ENCODE measurements at regions of chr15 and their contacts with region 1.

Region 1: DNA sequence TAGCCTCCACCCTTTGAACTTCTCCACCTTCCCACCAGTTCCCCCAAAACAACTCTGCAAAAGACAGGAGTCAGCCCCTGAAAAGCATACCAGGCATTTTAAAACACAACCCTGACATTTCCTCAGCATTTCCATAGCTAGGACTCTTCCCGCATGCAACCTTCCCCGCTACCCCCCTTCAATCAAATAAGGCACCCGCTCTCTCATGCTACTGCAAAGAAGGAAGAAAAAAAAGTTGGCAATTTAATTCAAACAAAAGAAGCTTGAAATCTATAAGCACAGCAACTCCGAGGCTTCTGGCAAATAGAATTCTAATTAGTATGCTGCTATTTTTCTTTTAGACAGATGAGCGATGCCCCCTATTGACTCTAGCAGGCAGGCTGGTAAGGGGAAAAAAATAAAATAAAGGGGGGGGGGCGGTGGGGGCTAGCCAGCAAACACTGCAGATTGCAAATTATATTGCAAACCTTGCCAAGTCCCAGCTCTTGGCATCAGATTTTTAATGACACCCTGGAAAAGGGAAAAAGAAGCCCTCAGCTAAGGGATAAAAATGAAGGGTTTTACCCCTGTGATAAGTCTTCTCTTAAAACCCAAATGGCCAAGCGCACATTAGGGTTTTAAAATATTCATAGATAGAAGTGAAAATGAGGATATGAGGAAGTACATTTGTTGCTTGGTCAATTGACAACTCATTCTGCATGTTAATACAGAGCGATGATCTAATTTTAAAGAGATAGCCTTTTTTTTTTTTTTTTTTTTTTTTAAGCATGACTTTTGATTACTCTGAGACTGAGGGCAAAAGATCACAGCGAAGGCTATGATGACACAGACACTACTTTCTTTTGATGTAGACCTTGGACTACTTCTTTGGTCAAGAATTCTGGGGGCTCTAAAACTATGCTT is 255.2 kb downstream of the NR2F2 start:
- DNase-seq: peak; percentile 8
- H3K4me3 Mint-ChIP-seq: no peak overlapping the region
- H3K27ac Mint-ChIP-seq: no peak overlapping the region
- H3K4me1 Mint-ChIP-seq: no peaks in the 10 kb centered on the region
- H3K27me3 Mint-ChIP-seq: peaks cover 87% of the 10 kb centered on the region
- CTCF ChIP-seq: no peak

Region 2: GRCh38 chr15:96064351-96064756 is 521.4 kb before region 1 on chr15:
- CTCF ChIA-PET with region 1: no interaction called
- POLR2A ChIA-PET with region 1: no interaction called
- intact Hi-C with region 1: no loop called
- DNase-seq: peak; percentile 12
- H3K4me3 Mint-ChIP-seq: no peak overlapping the region
- H3K27ac Mint-ChIP-seq: no peak overlapping the region
- H3K4me1 Mint-ChIP-seq: no peaks in the 10 kb centered on the region
- H3K27me3 Mint-ChIP-seq: no peaks in the 10 kb centered on the region
- CTCF ChIP-seq: no peak

Region 3: DNA sequence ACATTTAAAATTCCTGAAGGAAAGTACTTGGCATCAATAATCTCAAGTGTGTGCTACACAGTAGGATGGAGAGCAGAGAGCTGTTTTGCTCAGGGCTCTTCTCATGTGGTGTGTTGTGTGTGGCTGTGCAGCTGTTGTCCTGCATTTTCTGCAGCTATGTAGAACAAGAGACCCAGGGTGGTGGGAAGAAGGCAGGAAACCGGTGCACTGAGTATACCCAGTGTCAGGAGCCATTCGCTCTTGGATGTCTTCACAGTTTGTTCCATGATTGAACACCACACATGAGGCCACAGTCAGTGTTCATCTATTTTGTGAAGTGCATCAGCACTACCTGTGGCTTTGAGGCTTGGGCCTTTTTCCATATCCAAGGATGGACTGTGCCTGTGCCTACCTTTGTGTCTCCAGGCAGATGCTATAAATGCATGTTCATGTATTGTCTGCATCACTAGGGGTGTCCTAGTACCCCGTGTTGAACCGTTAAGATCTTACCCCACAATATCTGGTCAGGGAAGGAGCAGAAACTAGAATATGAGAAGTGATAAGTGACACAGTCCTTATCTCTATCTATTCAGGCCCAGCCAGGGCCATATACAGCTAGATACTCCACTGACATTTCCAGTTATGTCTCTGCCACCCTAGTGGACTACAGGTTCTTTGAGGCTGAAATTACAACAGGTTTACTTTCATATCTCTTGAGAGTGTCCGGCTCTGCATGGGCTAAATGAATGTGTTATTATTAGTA is 60.9 kb before region 1 on chr15:
- CTCF ChIA-PET with region 1: no interaction called
- POLR2A ChIA-PET with region 1: no interaction called
- intact Hi-C with region 1: no loop called
- DNase-seq: no peak
- H3K4me3 Mint-ChIP-seq: no peak overlapping the region
- H3K27ac Mint-ChIP-seq: no peak overlapping the region
- H3K4me1 Mint-ChIP-seq: no peaks in the 10 kb centered on the region
- H3K27me3 Mint-ChIP-seq: peaks cover 77% of the 10 kb centered on the region
- CTCF ChIP-seq: no peak

Region 4: DNA sequence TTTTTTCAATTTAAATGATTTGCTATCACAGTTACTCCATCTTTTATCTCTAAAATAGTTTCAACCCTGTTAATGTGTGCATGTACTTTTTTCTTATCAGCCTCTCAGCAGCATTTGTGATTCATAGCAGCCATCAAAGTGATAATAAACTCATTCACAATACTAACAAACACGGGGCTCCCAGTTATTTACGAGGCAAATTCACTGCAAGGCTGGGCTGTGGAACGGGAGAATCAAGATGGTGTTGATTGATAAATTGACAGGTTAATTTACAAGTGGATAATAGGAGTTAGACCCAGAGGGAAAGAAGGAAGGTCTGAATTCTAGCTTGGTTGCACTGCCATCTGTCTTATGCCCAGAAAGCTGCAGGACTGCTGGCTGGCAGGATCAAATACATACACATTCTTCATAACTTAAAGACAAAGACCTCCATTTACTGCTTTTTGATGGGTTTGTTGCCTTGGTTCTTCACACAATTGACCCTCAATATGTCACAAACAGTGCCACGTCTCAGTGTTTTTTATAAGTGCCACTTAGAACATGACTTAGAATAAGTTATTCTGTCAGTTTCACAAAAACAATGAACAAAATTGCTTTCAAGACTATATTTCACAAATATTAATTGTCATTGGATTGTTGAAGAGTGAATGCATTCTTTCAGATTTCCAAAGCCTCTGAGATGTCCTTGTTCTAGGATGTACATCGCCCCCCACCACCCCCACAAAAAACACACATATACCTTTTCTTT is 307.6 kb after region 1 on chr15:
- CTCF ChIA-PET with region 1: interaction called, 5 read pairs
- POLR2A ChIA-PET with region 1: no interaction called
- intact Hi-C with region 1: loop called (anchors 2 kb)
- DNase-seq: peak; percentile 49
- H3K4me3 Mint-ChIP-seq: no peak overlapping the region
- H3K27ac Mint-ChIP-seq: no peak overlapping the region
- H3K4me1 Mint-ChIP-seq: peaks cover 9% of the 10 kb centered on the region
- H3K27me3 Mint-ChIP-seq: no peaks in the 10 kb centered on the region
- CTCF ChIP-seq: peak; percentile 62

Region 5: GRCh38 chr15:97234851-97235610 is 649.3 kb after region 1 on chr15:
- CTCF ChIA-PET with region 1: interaction called, 3 read pairs
- POLR2A ChIA-PET with region 1: no interaction called
- intact Hi-C with region 1: loop called (anchors 10 kb)
- DNase-seq: peak; percentile 61
- H3K4me3 Mint-ChIP-seq: no peak overlapping the region
- H3K27ac Mint-ChIP-seq: no peak overlapping the region
- H3K4me1 Mint-ChIP-seq: peaks cover 17% of the 10 kb centered on the region
- H3K27me3 Mint-ChIP-seq: peaks cover 70% of the 10 kb centered on the region
- CTCF ChIP-seq: peak; percentile 79

Measured in MCF 10A (cell line).